ENCODE measurements at regions of chr13 and their contacts with region 1.

Region 1: DNA sequence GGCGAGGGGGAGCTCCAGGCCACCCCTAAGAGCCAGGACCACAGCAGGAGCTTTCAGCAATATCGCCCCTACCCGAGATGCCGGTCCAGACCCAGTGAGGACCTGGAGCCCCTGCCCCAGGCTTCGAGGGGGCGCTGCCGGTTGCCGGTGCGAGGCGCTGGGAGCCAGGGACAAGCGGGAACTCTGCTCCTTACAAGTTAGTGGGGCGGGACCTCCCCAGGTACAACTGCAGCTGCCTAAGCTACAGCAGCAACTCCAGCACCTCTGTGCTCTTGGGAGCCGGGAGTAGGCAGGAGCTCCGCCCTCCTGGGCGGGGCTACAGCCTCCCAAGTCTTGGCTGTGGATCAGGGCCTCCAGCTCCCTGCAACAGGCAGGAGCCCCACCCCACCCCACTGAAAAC is 15.2 kb upstream of the TSC22D1 start:
- DNase-seq: no peak

Region 2: GRCh38 chr13:44075113-44075512 is 516.2 kb before region 1 on chr13:
- in situ Hi-C with region 1: no loop called
- DNase-seq: no peak

Region 3: DNA sequence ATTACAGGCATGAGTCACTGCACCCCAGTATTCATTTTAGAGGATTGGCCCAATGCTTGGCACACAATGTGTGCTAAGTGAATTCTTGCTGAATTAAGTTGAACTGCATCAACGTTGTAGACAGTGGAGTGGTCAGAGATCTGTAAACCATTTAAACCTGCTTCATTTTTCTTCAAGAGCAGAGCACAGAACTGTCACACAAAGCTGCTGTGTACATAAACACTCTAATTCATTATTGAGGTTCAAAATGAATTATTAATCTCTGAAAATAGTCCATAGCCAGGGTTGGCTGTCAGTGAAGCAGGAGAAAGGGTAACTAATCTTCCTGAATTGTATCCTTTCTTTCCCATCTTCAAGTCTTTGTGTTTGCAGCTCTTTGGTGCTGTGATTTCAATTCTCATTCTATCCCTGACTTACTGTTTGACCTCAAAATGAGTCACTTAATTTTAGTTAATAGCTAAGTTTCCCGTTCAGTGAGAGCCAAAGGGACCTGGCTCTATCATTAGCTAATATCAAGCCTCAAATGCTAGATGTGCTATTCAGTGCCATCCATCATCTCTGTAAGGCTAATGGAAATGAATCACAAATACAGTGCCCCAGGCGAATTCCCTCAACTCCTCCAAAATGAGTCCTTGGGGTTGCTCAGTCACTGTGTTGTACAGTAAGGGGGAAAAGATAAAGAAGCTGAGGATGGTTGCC is 61.8 kb after region 1 on chr13:
- in situ Hi-C with region 1: loop called (anchors 10 kb)
- DNase-seq: no peak